ENCODE measurements at regions of chr7 and their contacts with region 1.

Region 1: DNA sequence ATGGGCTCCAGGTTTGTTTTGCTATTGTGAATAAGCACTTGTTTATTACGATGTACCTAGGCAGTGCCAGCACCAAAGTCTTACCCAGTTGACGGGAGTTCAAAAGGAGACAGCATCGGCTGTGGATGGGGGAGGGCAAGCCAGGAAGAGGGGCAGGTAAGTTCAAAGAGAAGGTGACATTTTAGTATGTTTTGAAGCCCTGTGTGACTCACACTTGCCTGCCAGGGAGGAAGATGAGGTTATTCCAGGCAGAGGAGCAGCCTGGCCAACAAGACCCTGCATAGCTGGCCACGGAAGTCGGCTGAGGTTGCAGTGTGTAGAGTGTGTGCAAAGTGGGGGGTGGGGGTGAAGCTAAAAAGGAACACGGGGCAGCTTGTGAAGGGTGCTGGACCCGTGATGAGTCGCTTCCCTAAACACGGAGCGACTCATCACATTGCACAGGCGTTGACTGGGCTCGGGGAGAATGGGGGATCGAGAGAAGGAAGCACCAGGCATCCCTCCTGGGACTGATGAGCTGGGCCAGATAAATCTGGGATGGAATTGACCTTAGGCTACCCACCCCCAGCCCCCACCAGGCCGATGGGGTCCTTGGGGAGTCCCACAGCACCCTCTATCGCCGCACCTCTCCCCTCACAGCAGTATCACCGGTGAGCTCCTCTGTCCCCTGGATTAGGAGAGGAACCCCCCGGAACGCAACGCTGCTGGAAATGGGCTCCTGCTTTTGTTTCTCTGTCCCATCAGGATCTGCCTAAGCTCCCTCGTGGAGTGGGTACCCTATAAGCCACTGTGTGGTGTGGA is 97.9 kb upstream of the IKZF1 start:
- DNase-seq: peak; percentile 77
- H3K4me3 Mint-ChIP-seq: peak overlapping the region; percentile 48
- H3K27ac Mint-ChIP-seq: peak overlapping the region; percentile 93
- H3K4me1 Mint-ChIP-seq: peaks cover 86% of the 10 kb centered on the region
- H3K27me3 Mint-ChIP-seq: no peaks in the 10 kb centered on the region

Region 2: GRCh38 chr7:50142425-50143017 is 64.1 kb before region 1 on chr7:
- CTCF ChIA-PET with region 1: interaction called, 26 read pairs
- POLR2A ChIA-PET with region 1: no interaction called
- DNase-seq: no peak
- H3K4me3 Mint-ChIP-seq: peak overlapping the region; percentile 29
- H3K27ac Mint-ChIP-seq: peak overlapping the region; percentile 42
- H3K4me1 Mint-ChIP-seq: peaks cover 42% of the 10 kb centered on the region
- H3K27me3 Mint-ChIP-seq: peaks cover 12% of the 10 kb centered on the region

Region 3: DNA sequence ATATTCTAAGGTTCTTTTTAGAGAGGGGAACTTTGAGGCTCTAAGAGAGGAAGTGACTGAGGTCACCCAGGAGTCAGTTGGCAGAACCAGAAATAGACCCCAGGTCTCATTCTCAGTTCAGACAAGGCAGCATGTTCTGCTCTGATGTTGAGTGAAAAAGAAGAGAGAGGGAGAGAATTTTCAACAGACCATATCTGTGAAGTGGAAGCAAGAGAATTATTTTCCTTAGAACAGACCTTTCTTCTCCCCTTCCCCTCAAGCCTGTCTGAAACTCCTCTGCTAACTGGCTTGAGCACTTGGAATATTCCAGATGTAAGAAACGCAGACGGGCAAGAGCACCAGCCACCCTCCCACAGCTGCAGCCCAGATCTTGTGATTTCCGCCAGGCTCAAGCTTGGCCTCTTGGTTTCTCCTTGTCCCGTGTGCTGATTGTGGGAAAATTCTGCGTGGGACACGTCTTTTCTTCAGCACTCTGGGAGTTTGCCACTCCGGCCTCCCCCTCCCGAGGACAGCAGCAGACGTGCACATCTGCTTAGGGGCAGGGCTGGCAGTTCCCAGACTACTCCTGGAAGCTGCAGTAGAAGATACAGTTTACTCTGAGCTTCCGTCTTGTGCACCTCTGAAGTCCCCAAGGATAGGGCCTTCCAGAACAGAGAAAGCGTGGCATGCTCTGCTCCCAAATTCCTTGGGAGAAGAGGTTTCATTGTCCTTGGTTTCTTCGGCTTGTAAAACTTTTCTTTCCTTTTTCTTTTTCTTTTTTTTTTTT is 75.2 kb after region 1 on chr7:
- CTCF ChIA-PET with region 1: interaction called, 11 read pairs
- POLR2A ChIA-PET with region 1: no interaction called
- DNase-seq: no peak
- H3K4me3 Mint-ChIP-seq: peak overlapping the region; percentile 43
- H3K27ac Mint-ChIP-seq: peak overlapping the region; percentile 21
- H3K4me1 Mint-ChIP-seq: peaks cover 34% of the 10 kb centered on the region
- H3K27me3 Mint-ChIP-seq: peaks cover 6% of the 10 kb centered on the region

Region 4: GRCh38 chr7:50317221-50317678 is 110.6 kb after region 1 on chr7:
- CTCF ChIA-PET with region 1: interaction called, 108 read pairs
- POLR2A ChIA-PET with region 1: interaction called, 367 read pairs
- DNase-seq: peak; percentile 64
- H3K4me3 Mint-ChIP-seq: peak overlapping the region; percentile 68
- H3K27ac Mint-ChIP-seq: peak overlapping the region; percentile 99
- H3K4me1 Mint-ChIP-seq: peaks cover 93% of the 10 kb centered on the region
- H3K27me3 Mint-ChIP-seq: no peaks in the 10 kb centered on the region

Region 5: GRCh38 chr7:50359995-50360925 is 153.6 kb after region 1 on chr7:
- CTCF ChIA-PET with region 1: interaction called, 95 read pairs
- POLR2A ChIA-PET with region 1: interaction called, 158 read pairs
- DNase-seq: peak; percentile 82
- H3K4me3 Mint-ChIP-seq: peak overlapping the region; percentile 53
- H3K27ac Mint-ChIP-seq: peak overlapping the region; percentile 96
- H3K4me1 Mint-ChIP-seq: peaks cover 98% of the 10 kb centered on the region
- H3K27me3 Mint-ChIP-seq: no peaks in the 10 kb centered on the region

Region 6: GRCh38 chr7:50467817-50468610 is 261.4 kb after region 1 on chr7:
- CTCF ChIA-PET with region 1: interaction called, 15 read pairs
- POLR2A ChIA-PET with region 1: no interaction called
- DNase-seq: peak; percentile 85
- H3K4me3 Mint-ChIP-seq: no peak overlapping the region
- H3K27ac Mint-ChIP-seq: no peak overlapping the region
- H3K4me1 Mint-ChIP-seq: peaks cover 13% of the 10 kb centered on the region
- H3K27me3 Mint-ChIP-seq: peaks cover 1% of the 10 kb centered on the region